BJ (cell line): ENCODE measurements at regions of chr5 and their contacts with region 1.

Region 1: DNA sequence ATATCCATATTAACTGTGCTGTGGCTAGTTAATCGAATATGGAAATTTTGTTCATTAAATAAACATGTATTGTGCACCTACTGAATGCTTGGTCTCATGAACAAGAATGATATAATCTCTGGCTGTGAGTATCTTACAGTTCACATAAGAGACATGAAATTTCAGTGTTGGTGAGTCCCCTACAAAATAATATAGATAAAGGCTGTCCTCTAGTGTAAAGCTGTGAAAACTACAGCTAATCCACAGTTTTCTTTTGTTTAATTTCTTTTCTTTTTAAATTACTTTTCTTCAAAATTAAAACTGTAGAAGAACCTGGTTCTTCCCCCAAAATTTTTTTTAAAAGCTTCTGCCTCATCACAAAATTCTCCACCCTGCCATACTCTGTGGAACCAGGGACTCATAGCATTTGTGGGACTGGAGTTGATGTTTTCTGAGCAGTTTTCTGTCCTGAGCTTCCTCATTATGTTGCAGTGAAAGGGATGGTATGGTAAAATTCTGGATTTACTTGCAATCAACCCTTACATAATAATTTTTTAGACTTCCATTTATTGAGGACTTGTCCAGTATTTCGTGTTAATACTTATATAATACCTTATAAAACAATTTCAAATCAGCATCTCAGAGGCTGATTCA is 135.0 kb downstream of the STK32A start:
- DNase-seq: no peak
- H3K4me3 ChIP-seq: no peak overlapping the region
- H3K27me3 ChIP-seq: no peaks in the 10 kb centered on the region
- CTCF ChIP-seq: peak; percentile 44

Region 2: DNA sequence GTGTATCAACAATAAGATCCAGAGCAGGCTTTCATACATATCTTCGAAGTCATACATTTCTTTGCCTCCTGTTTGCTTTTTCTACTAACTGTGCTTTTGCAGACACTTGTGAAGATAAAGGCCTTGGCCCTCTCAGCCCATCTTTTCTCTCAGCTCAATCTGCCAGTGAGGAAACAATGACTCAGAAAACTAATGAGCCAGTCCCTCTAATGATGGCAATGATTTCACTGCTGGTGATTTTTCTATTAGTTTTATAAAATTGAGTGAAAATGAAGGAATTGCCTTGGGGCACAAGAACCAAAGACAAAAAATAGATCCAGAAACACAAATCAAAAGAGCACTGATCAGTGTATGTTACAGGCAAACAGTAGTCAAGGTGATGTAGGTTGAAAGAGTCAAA is 323.6 kb before region 1 on chr5:
- CTCF ChIA-PET with region 1: no interaction called
- POLR2A ChIA-PET with region 1: no interaction called
- DNase-seq: no peak
- H3K4me3 ChIP-seq: no peak overlapping the region
- H3K27me3 ChIP-seq: no peaks in the 10 kb centered on the region
- CTCF ChIP-seq: no peak

Region 3: DNA sequence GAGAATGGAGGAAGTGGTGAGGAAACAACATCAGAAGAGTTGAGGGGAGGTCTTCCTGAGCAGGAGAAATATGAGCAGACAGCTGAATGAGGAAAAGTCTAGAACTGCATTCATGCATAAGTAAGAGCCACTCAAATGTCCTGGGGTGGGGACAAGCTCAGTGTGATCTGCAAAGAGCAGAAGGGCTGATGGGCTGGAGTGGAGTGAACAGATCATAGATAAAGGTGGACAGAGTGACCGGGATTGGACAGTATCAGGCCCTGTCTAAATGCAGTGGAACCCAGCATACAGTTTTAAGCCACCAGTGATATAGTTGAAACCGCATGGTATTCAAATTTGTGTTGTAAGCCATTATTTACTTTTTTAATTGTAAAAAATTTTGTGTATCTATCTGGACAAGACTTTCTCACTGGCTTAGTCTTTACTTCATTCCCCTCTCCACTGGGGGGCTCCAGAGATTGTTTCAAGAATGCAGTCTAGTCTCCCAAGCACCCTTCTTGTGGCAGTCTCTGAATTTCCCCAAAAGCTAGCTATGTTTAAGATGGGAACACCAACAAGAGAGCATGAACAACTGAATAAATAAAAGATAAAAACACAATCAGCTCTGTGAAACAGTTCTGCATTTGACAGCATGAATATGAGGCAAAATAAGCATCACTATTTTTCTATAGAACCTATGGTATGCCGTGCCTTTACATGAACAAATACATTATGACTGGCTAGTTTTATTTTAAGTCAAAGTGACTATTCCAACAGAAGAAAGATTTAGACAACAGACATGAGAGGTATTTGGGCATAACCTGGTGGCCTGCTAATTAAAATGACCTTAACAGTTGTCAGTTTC is 145.7 kb before region 1 on chr5:
- CTCF ChIA-PET with region 1: interaction called, 37 read pairs
- POLR2A ChIA-PET with region 1: no interaction called
- DNase-seq: peak; percentile 3
- H3K4me3 ChIP-seq: no peak overlapping the region
- H3K27me3 ChIP-seq: no peaks in the 10 kb centered on the region
- CTCF ChIP-seq: peak; percentile 74

Region 4: GRCh38 chr5:147348046-147348445 is 21.8 kb before region 1 on chr5:
- CTCF ChIA-PET with region 1: interaction called, 10 read pairs
- POLR2A ChIA-PET with region 1: no interaction called
- DNase-seq: peak; percentile 9
- H3K4me3 ChIP-seq: no peak overlapping the region
- H3K27me3 ChIP-seq: no peaks in the 10 kb centered on the region
- CTCF ChIP-seq: no peak